OCI-LY7 (cell line): ENCODE measurements at regions of chr3 and their contacts with region 1.

Region 1: DNA sequence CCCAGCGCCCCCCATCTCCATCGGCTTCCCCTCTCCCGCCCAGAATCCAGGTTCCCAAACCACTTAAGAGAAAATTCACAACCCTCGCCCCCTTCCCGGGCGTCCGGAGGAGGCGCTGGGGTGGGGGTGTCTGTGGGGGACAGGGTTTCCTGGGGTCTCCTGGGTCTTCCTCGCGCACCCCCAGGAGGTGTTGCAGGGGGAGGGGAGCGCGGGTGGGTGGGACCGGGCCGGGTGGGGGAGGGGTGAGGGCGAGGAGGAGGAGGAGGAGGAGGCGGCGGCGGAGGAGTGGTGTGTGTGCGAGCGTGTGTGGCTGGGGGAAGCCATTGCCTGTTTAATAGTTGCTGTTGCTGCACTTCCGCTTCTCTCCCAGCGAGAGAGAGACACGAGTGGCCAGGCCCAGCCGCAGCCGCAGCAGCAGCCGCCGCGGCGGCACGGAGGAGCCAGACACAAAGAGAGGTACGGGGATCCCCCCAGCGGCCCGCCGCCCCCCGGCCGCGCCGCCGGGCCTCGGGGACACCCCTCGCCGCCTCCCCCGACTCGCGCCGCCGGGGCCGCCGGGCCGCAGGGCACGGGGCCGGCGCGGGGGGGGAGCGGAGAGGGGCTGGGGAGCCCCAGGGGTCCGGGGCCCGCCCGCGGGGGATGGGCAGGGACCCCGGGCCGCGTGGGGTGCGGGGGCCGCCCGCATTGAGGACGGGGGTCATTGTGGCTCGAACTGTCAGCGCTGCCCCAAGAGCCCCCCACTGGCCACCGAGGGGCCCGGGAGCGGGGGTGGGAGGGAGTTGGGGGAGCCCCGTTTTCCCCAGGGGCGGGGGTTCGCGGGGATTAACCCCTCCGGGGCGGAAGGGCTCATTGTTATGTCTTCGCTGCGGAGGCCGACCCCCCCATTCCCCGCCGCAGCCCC is at the start of gene UBE2E1:
- DNase-seq: peak; percentile 87
- H3K4me3 ChIP-seq: peak within 1 kb of the TSS; percentile 85
- H3K27ac ChIP-seq: peak within 1 kb of the TSS; percentile 47
- H3K4me1 ChIP-seq: peaks cover 48% of the 10 kb centered on the region
- CTCF ChIP-seq: no peak
- total RNA-seq, gene UBE2E1: 96.7 and 126 TPM in 2 replicates

Region 2: GRCh38 chr3:22922317-22922716 is 883.6 kb before region 1 on chr3:
- CTCF ChIA-PET with region 1: no interaction called
- POLR2A ChIA-PET with region 1: no interaction called
- intact Hi-C with region 1: loop called (anchors 10 kb)
- DNase-seq: peak; percentile 57
- H3K4me3 ChIP-seq: no peak overlapping the region
- H3K27ac ChIP-seq: no peak overlapping the region
- H3K4me1 ChIP-seq: no peaks in the 10 kb centered on the region
- CTCF ChIP-seq: peak; percentile 81

Region 3: GRCh38 chr3:23341147-23341838 is 464.6 kb before region 1 on chr3:
- CTCF ChIA-PET with region 1: no interaction called
- POLR2A ChIA-PET with region 1: no interaction called
- intact Hi-C with region 1: loop called (anchors 10 kb)
- DNase-seq: peak; percentile 69
- H3K4me3 ChIP-seq: peak overlapping the region; percentile 47
- H3K27ac ChIP-seq: peak overlapping the region; percentile 94
- H3K4me1 ChIP-seq: peaks cover 87% of the 10 kb centered on the region
- CTCF ChIP-seq: no peak

Region 4: GRCh38 chr3:23567917-23568316 is 238.0 kb before region 1 on chr3:
- CTCF ChIA-PET with region 1: no interaction called
- POLR2A ChIA-PET with region 1: no interaction called
- intact Hi-C with region 1: no loop called
- DNase-seq: no peak
- H3K4me3 ChIP-seq: no peak overlapping the region
- H3K27ac ChIP-seq: no peak overlapping the region
- H3K4me1 ChIP-seq: peaks cover 9% of the 10 kb centered on the region
- CTCF ChIP-seq: no peak

Region 5: DNA sequence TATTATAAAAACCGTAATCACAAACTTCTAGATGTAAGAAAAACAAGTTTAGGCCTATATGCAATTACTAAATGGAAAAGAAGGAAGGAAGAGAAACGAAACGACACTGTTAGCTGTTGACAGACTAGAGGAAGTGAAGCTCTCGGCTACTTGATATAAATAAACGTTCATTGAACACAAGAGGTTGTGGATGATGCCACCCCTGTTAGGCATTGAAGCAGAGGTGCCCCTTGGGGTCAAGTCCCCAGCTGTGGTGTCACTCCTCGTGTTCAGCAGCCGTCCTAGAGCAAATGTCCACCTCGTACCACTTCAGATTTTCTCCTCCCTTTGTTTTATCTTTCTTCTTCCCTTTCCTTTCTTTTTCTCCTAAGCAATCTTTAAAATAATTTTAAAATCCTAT is 146.6 kb before region 1 on chr3:
- CTCF ChIA-PET with region 1: no interaction called
- POLR2A ChIA-PET with region 1: interaction called, 5 read pairs
- intact Hi-C with region 1: loop called (anchors 2 kb)
- DNase-seq: peak; percentile 96
- H3K4me3 ChIP-seq: peak overlapping the region; percentile 53
- H3K27ac ChIP-seq: peak overlapping the region; percentile 97
- H3K4me1 ChIP-seq: peaks cover 93% of the 10 kb centered on the region
- CTCF ChIP-seq: no peak

Region 6: GRCh38 chr3:23859016-23859743 is 53.3 kb after region 1 on chr3:
- CTCF ChIA-PET with region 1: no interaction called
- POLR2A ChIA-PET with region 1: interaction called, 3 read pairs
- intact Hi-C with region 1: loop called (anchors 5 kb)
- DNase-seq: no peak
- H3K4me3 ChIP-seq: no peak overlapping the region
- H3K27ac ChIP-seq: no peak overlapping the region
- H3K4me1 ChIP-seq: peaks cover 29% of the 10 kb centered on the region
- CTCF ChIP-seq: no peak

Region 7: DNA sequence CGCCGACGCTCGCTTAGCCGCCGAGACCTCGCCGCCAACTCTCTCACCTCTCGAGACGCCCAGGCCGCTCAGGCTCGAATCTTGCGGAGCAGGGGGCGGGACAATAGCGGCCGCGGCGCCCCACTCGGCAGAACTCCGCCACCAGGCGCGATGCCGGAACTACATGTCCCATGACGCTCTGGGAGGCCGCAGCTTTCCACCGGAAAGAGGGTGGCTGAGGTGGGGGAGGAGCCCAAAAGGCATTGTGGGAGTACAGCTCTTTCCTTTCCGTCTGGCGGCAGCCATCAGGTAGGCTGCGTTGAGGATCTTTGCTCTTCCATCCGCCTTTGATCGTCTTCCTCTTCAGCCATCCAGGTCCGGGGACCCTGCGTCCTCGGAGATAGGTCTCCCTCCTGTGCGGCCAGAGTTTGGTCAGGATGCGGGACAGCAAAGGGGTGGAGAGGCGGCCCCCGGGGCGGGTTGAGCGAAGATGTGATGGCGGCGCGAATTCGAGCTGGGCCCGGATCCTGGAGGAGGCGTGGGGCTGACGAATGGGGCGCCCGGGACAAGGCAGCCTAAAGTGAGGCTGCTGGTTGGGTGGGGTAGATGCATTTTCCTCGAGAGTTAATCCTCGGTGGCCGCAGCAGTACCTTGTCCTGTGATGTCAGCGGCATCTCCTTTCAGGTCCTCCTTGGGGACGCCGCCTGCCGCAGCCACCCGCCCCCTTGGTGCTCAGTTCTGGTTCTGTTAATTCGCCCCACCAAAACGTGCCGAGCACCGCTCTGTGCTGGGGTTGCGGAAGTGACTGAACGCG is 111.2 kb after region 1 on chr3 and contains the starts of genes NKIRAS1 and RPL15:
- CTCF ChIA-PET with region 1: no interaction called
- POLR2A ChIA-PET with region 1: interaction called, 5 read pairs
- intact Hi-C with region 1: loop called (anchors 2 kb)
- DNase-seq: peak; percentile 98
- H3K4me3 ChIP-seq: peak within 1 kb of the TSS; percentile 97
- H3K27ac ChIP-seq: peak within 1 kb of the TSS; percentile 64
- H3K4me1 ChIP-seq: peaks cover 45% of the 10 kb centered on the region
- CTCF ChIP-seq: no peak
- total RNA-seq, gene NKIRAS1: 4.0 and 4.1 TPM in 2 replicates
- total RNA-seq, gene RPL15: 2,205 and 2,390 TPM in 2 replicates

Region 8: GRCh38 chr3:24004171-24004938 is 198.5 kb after region 1 on chr3:
- CTCF ChIA-PET with region 1: no interaction called
- POLR2A ChIA-PET with region 1: no interaction called
- intact Hi-C with region 1: no loop called
- DNase-seq: no peak
- H3K4me3 ChIP-seq: no peak overlapping the region
- H3K27ac ChIP-seq: no peak overlapping the region
- H3K4me1 ChIP-seq: no peaks in the 10 kb centered on the region
- CTCF ChIP-seq: no peak

Region 9: DNA sequence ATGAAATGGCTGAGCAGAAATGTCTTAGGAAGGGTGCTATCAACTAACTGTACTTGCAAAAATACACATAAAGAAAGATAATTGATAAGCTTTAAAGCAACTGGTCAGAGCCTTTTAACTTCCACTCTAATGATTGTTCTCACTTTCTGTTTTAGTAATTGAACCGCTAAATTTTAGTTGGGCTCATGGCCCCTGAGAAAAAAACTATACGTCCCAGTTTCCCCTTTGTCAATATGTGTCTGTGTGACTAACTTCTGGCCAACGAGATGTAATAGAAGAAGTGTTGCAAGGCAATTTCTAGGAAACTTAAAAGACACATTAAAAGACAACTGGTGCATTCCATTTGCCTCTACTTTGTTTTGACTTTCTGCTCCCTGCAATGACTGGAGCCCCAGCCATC is 363.1 kb after region 1 on chr3:
- CTCF ChIA-PET with region 1: no interaction called
- POLR2A ChIA-PET with region 1: no interaction called
- intact Hi-C with region 1: no loop called
- DNase-seq: no peak
- H3K4me3 ChIP-seq: no peak overlapping the region
- H3K27ac ChIP-seq: no peak overlapping the region
- H3K4me1 ChIP-seq: no peaks in the 10 kb centered on the region
- CTCF ChIP-seq: no peak

Region 10: DNA sequence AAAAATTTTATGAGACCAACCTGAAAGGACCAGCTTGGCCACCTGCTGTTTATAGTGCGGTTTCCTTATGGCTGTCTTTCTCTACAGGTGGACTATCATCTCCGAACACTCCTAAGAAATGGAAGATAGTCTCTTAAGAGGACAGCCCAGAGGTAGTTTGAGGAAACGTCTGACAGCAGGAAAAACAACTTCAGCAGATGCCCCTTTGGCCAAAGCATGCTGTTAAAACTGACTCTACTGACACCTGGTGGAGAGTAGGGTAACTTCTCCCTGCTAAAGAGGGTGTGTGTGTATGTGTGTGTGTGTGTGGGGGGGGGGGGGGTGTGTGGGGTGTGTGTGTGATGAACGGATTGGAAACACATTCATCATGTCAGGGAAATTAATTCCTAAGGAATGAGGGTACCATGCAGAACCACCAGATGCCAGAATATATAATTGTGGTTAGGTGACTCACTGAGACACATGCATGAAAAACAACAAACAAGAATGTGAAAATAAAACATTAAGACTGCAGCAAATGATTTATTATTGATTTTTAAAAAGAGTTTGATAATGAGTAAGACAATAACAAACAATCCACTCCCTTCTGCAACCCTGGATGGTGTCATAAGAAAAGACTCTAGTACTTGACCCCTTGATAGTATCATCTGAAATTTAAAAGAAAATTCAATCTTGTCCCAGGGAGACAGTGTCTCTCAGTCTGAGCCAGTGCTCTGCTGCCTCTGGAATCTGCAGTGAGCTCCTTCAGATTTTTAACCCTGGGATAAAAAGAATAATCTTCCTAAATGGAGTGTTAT is 432.3 kb after region 1 on chr3:
- CTCF ChIA-PET with region 1: no interaction called
- POLR2A ChIA-PET with region 1: no interaction called
- intact Hi-C with region 1: no loop called
- DNase-seq: peak; percentile 75
- H3K4me3 ChIP-seq: no peak overlapping the region
- H3K27ac ChIP-seq: no peak overlapping the region
- H3K4me1 ChIP-seq: no peaks in the 10 kb centered on the region
- CTCF ChIP-seq: peak; percentile 84